Lower lobe of right lung (tissue), 2 donors: ENCODE measurements at regions of chr3 and their contacts with region 1.

Region 1: GRCh38 chr3:159804726-159805410 is 183.8 kb upstream of the IL12A start:
- DNase-seq: peak; percentile 49
- ATAC-seq: peak; percentile 91 to 93
- H3K4me3 ChIP-seq: no peak overlapping the region
- H3K27ac ChIP-seq: no peak overlapping the region
- H3K4me1 ChIP-seq: peaks cover 34% of the 10 kb centered on the region
- H3K27me3 ChIP-seq: no peaks in the 10 kb centered on the region
- CTCF ChIP-seq: peak; percentile 85

Region 2: GRCh38 chr3:159260049-159260662 is 544.7 kb before region 1 on chr3:
- intact Hi-C with region 1: loop called (anchors 10 kb)
- DNase-seq: no peak
- ATAC-seq: peak; percentile 64 to 65
- H3K4me3 ChIP-seq: no peak overlapping the region
- H3K27ac ChIP-seq: no peak overlapping the region
- H3K4me1 ChIP-seq: no peaks in the 10 kb centered on the region
- H3K27me3 ChIP-seq: no peaks in the 10 kb centered on the region
- CTCF ChIP-seq: peak; percentile 65

Region 3: GRCh38 chr3:159620873-159621272 is 184.0 kb before region 1 on chr3:
- intact Hi-C with region 1: loop called (anchors 10 kb)
- DNase-seq: no peak
- ATAC-seq: no peak
- H3K4me3 ChIP-seq: no peak overlapping the region
- H3K27ac ChIP-seq: no peak overlapping the region
- H3K4me1 ChIP-seq: no peaks in the 10 kb centered on the region
- H3K27me3 ChIP-seq: no peaks in the 10 kb centered on the region
- CTCF ChIP-seq: no peak

Region 4: GRCh38 chr3:159953325-159954085 is 148.6 kb after region 1 on chr3:
- intact Hi-C with region 1: no loop called
- DNase-seq: no peak
- ATAC-seq: no peak
- H3K4me3 ChIP-seq: no peak overlapping the region
- H3K27ac ChIP-seq: no peak overlapping the region
- H3K4me1 ChIP-seq: no peaks in the 10 kb centered on the region
- H3K27me3 ChIP-seq: no peaks in the 10 kb centered on the region
- CTCF ChIP-seq: no peak

Region 5: GRCh38 chr3:160134964-160135363 is 330.1 kb after region 1 on chr3:
- intact Hi-C with region 1: no loop called
- DNase-seq: no peak
- ATAC-seq: peak; percentile 56 to 63
- H3K4me3 ChIP-seq: no peak overlapping the region
- H3K27ac ChIP-seq: no peak overlapping the region
- H3K4me1 ChIP-seq: peaks cover 14% of the 10 kb centered on the region
- H3K27me3 ChIP-seq: no peaks in the 10 kb centered on the region
- CTCF ChIP-seq: no peak